ENCODE measurements at regions of chr14 and their contacts with region 1.

Region 1: GRCh38 chr14:54782751-54783679 is 119.6 kb downstream of the GCH1 start:
- DNase-seq: peak in 1 of 2 experiments; percentile 34
- ATAC-seq: peak; percentile 64 to 88; a peak in 5 of 6 replicates
- H3K4me3 ChIP-seq: no peak overlapping the region
- H3K27ac ChIP-seq: no peak overlapping the region
- H3K4me1 ChIP-seq: no peaks in the 10 kb centered on the region
- CTCF ChIP-seq: no peak
- EP300 ChIP-seq: no peak
- POLR2A ChIP-seq: no peak
- RAD21 ChIP-seq: no peak

Region 2: GRCh38 chr14:54669721-54670561 is 113.1 kb before region 1 on chr14:
- CTCF ChIA-PET with region 1: no interaction called
- POLR2A ChIA-PET with region 1: no interaction called
- DNase-seq: no peak
- ATAC-seq: peak in 1 of 2 experiments; percentile 51; a peak in 3 of 6 replicates
- H3K4me3 ChIP-seq: no peak overlapping the region
- H3K27ac ChIP-seq: peak overlapping the region; percentile 45 to 52; a peak in 3 of 6 replicates
- H3K4me1 ChIP-seq: peaks cover 30% of the 10 kb centered on the region
- CTCF ChIP-seq: no peak
- EP300 ChIP-seq: no peak
- POLR2A ChIP-seq: no peak
- RAD21 ChIP-seq: no peak

Region 3: DNA sequence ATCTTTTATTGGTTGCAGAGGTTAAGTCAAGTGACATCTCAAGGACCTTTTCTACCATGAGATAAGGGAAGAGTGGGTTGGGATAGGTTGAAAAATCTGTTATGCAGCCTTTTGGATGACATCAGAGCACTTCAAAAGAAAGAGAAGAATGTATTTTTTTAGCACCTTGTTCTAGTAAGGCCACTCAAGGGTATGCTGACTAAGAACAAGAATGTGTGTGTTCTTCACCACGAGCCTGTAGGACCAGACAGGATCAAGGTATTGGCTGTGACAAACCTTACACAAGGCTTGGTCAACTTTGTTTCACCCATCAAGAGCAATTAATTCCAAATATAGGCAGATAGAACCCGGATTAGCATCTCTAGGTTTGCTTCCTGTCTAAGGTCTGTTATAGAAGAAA is 73.6 kb before region 1 on chr14:
- CTCF ChIA-PET with region 1: no interaction called
- POLR2A ChIA-PET with region 1: no interaction called
- DNase-seq: no peak
- ATAC-seq: no peak
- H3K4me3 ChIP-seq: no peak overlapping the region
- H3K27ac ChIP-seq: no peak overlapping the region
- H3K4me1 ChIP-seq: no peaks in the 10 kb centered on the region
- CTCF ChIP-seq: no peak
- EP300 ChIP-seq: no peak
- POLR2A ChIP-seq: no peak
- RAD21 ChIP-seq: no peak

Region 4: GRCh38 chr14:54805521-54806322 is 22.7 kb after region 1 on chr14:
- CTCF ChIA-PET with region 1: interaction called, 159 read pairs
- POLR2A ChIA-PET with region 1: no interaction called
- DNase-seq: peak; percentile 82 to 86
- ATAC-seq: peak; percentile 90 to 96
- H3K4me3 ChIP-seq: no peak overlapping the region
- H3K27ac ChIP-seq: no peak overlapping the region
- H3K4me1 ChIP-seq: 0 out of 3 replicates have a peak, but pooled peaks cover 3% of the 10 kb centered on the region
- CTCF ChIP-seq: peak; percentile 95
- EP300 ChIP-seq: no peak
- POLR2A ChIP-seq: no peak
- RAD21 ChIP-seq: peak; percentile 88 to 90